Activated CD4-positive, alpha-beta T cell treated with anti-CD3 and anti-CD28 coated beads, Interleukin-2, amount 10 ng/mL, durations not matched to agents 24 days and 14 days (primary cell): ENCODE measurements at regions of chr3 and their contacts with region 1.

Region 1: GRCh38 chr3:51391075-51391567 is at the start of gene RBM15B:
- DNase-seq: peak; percentile 99
- H3K4me3 Mint-ChIP-seq: peak within 1 kb of the TSS; percentile 88
- H3K27ac Mint-ChIP-seq: peak within 1 kb of the TSS; percentile 88
- H3K4me1 Mint-ChIP-seq: peaks cover 55% of the 10 kb centered on the region
- H3K27me3 Mint-ChIP-seq: no peaks in the 10 kb centered on the region
- total RNA-seq, gene RBM15B: 37.7 and 38.3 TPM in 2 replicates

Region 2: GRCh38 chr3:51670823-51671733 is 280.0 kb after region 1 on chr3 and contains the start of gene TEX264:
- intact Hi-C with region 1: loop called (anchors 2 kb)
- DNase-seq: peak; percentile 99
- H3K4me3 Mint-ChIP-seq: peak within 1 kb of the TSS; percentile 93
- H3K27ac Mint-ChIP-seq: peak within 1 kb of the TSS; percentile 93
- H3K4me1 Mint-ChIP-seq: peaks cover 61% of the 10 kb centered on the region
- H3K27me3 Mint-ChIP-seq: no peaks in the 10 kb centered on the region
- total RNA-seq, gene TEX264: 45.6 and 47.0 TPM in 2 replicates